Activated T-helper 2 cell treated with anti-CD3 and anti-CD28 coated beads, Interferon-gamma antibody, Interleukin-2, Interleukin-4, amounts not matched to agents 10 μg/mL and 5 μg/mL and 100 μg/mL, durations not matched to agents 14 hours and 24 hours and 36 hours (primary cell): ENCODE measurements at regions of chr11 and their contacts with region 1.

Region 1: DNA sequence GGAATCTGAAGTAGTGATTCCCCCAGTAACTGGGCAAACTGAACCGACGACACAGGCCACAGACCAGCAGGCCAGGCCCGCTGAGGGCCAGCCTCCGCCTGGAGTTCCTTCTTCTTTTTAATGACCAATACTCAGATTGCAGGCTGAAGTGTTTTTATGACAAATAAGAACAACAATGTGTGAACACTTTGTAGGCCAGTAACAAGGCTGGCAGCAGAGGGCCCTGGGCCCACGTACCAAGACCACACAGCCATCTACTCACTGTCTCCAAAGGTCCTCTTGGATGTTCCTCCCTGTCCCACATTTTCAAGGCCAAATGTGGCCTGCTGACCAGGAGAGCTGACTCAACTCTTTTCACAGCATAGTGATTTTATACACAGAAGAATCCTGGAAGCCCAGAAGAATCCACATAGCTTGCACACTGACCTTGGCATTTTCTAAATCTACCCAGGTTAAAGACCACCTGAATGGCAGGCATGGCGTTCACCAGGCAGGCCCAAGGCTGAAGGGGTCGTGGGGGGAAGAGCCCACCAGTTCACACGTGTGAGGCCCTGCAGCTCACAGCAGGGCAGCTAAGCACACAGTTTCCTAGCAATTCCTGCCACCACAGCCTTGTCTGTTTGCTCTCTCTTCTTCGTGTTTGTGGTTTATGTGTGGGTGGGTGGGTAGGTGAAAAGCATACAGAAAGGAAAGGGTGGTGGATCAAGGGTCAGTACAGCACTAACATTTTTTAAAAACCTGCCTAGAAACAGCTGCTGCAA is 13.3 kb downstream of the SMCO4 start:
- DNase-seq: no peak
- H3K4me3 Mint-ChIP-seq: peak overlapping the region; percentile 32
- H3K27ac Mint-ChIP-seq: peak overlapping the region; percentile 80
- H3K4me1 Mint-ChIP-seq: peaks cover 78% of the 10 kb centered on the region
- H3K27me3 Mint-ChIP-seq: no peaks in the 10 kb centered on the region

Region 2: GRCh38 chr11:93197380-93198214 is 332.3 kb before region 1 on chr11 and contains the start of gene SLC36A4:
- intact Hi-C with region 1: loop called (anchors 5 kb)
- DNase-seq: peak; percentile 83
- H3K4me3 Mint-ChIP-seq: peak within 1 kb of the TSS; percentile 88
- H3K27ac Mint-ChIP-seq: peak within 1 kb of the TSS; percentile 92
- H3K4me1 Mint-ChIP-seq: peaks cover 21% of the 10 kb centered on the region
- H3K27me3 Mint-ChIP-seq: peaks cover 15% of the 10 kb centered on the region
- total RNA-seq, gene SLC36A4: 18.9 and 19.8 TPM in 2 replicates

Region 3: DNA sequence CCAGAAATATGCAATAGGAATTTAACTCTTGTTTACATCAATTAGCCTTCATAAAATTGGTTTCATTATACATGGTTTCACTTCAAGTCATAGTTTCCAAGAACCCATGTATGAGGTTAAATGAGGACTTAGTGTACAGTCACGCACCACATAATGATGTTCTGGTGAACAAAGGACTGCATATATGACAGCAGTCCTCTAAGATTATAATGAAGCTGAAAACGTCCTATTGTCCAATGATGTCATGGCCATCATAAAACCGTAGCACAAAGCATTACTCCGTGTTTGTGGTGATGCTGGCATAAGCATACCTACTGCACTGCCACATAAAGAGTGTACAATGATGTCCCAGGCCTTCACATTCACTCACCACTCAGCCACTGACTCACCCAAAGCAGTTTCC is 17.8 kb before region 1 on chr11:
- intact Hi-C with region 1: loop called (anchors 1 kb)
- DNase-seq: peak; percentile 25
- H3K4me3 Mint-ChIP-seq: peak overlapping the region; percentile 62
- H3K27ac Mint-ChIP-seq: peak overlapping the region; percentile 95
- H3K4me1 Mint-ChIP-seq: peaks cover 45% of the 10 kb centered on the region
- H3K27me3 Mint-ChIP-seq: no peaks in the 10 kb centered on the region

Region 4: GRCh38 chr11:93543292-93543977 is 13.5 kb after region 1 on chr11 and contains the start of gene SMCO4:
- intact Hi-C with region 1: loop called (anchors 1 kb)
- DNase-seq: peak; percentile 68
- H3K4me3 Mint-ChIP-seq: peak within 1 kb of the TSS; percentile 90
- H3K27ac Mint-ChIP-seq: peak within 1 kb of the TSS; percentile 79
- H3K4me1 Mint-ChIP-seq: peaks cover 31% of the 10 kb centered on the region
- H3K27me3 Mint-ChIP-seq: peaks cover 8% of the 10 kb centered on the region
- total RNA-seq, gene SMCO4: 40.8 and 41.5 TPM in 2 replicates

Region 5: DNA sequence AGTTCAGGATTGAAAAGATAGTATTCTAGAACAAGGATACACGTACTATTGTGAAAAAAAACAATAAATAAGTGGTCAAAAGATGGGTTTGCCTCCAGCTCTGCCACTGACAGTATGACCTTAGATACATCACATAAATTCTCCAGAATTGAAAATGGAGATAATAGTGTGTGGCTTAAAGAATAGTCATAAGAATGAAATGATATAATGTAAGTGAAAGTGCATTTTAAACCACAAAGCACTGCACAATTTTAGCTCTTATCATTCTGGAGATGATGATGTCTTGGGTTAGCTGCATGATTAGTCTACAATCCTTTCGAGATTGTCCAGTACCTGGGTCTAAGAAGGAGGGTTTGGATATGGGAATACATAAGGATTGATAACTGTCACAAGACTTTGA is 109.7 kb after region 1 on chr11:
- intact Hi-C with region 1: loop called (anchors 5 kb)
- DNase-seq: no peak
- H3K4me3 Mint-ChIP-seq: no peak overlapping the region
- H3K27ac Mint-ChIP-seq: no peak overlapping the region
- H3K4me1 Mint-ChIP-seq: peaks cover 12% of the 10 kb centered on the region
- H3K27me3 Mint-ChIP-seq: peaks cover 1% of the 10 kb centered on the region

Region 6: GRCh38 chr11:93662177-93662575 is 132.3 kb after region 1 on chr11:
- intact Hi-C with region 1: loop called (anchors 5 kb)
- DNase-seq: no peak
- H3K4me3 Mint-ChIP-seq: peak overlapping the region; percentile 95
- H3K27ac Mint-ChIP-seq: peak overlapping the region; percentile 93
- H3K4me1 Mint-ChIP-seq: peaks cover 43% of the 10 kb centered on the region
- H3K27me3 Mint-ChIP-seq: no peaks in the 10 kb centered on the region

Region 7: GRCh38 chr11:93727985-93728791 is 198.3 kb after region 1 on chr11:
- intact Hi-C with region 1: no loop called
- DNase-seq: no peak
- H3K4me3 Mint-ChIP-seq: no peak overlapping the region
- H3K27ac Mint-ChIP-seq: peak overlapping the region; percentile 75
- H3K4me1 Mint-ChIP-seq: peaks cover 10% of the 10 kb centered on the region
- H3K27me3 Mint-ChIP-seq: no peaks in the 10 kb centered on the region

Region 8: GRCh38 chr11:94134651-94135512 is 605.0 kb after region 1 on chr11:
- intact Hi-C with region 1: loop called (anchors 10 kb)
- DNase-seq: no peak
- H3K4me3 Mint-ChIP-seq: no peak overlapping the region
- H3K27ac Mint-ChIP-seq: peak overlapping the region; percentile 67
- H3K4me1 Mint-ChIP-seq: peaks cover 36% of the 10 kb centered on the region
- H3K27me3 Mint-ChIP-seq: no peaks in the 10 kb centered on the region